Activated naive CD4-positive, alpha-beta T cell treated with anti-CD3 and anti-CD28 coated beads, Interleukin-2, amount 10 ng/mL, durations not matched to agents 7 days and 5 days (primary cell): ENCODE measurements at regions of chr17 and their contacts with region 1.

Region 1: GRCh38 chr17:35242805-35243560 is at the start of gene SLFN5:
- DNase-seq: peak; percentile 96
- H3K4me3 Mint-ChIP-seq: peak within 1 kb of the TSS; percentile 91
- H3K27ac Mint-ChIP-seq: peak within 1 kb of the TSS; percentile 99
- H3K4me1 Mint-ChIP-seq: peaks cover 59% of the 10 kb centered on the region
- H3K27me3 Mint-ChIP-seq: peaks cover 4% of the 10 kb centered on the region

Region 2: DNA sequence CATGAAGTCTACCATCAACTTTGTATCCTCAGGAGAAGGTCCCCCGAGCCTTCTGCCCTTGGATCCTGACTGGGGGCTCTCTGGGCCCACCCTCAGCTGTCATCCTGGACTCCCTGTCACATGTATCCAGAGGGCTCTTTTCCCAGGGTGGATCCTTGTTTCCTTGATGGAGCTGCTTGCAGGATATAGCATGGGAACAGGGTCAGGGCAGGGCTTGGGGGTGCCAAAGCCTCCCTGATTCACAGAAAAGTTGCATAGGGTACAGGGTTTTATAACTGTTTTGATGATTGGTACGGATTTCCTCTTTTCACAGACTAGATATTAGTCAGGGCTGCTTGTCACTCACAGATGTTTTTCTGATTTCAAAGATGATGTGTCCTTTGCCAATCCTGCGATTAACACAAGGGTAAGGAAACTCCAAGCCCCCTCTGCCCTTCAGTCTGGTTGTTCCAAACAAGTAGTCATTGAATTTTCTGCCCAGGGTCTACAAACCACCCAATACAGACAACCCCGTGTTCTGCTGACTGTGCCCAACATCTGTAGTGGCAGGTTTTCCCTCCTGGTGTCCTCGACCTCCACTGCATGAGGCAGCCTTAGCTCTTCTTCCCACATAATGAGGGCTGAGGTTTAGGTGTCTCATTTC is 28.2 kb before region 1 on chr17:
- CTCF ChIA-PET with region 1: interaction called, 49 read pairs
- DNase-seq: peak; percentile 52
- H3K4me3 Mint-ChIP-seq: peak overlapping the region; percentile 70
- H3K27ac Mint-ChIP-seq: peak overlapping the region; percentile 99
- H3K4me1 Mint-ChIP-seq: peaks cover 94% of the 10 kb centered on the region
- H3K27me3 Mint-ChIP-seq: no peaks in the 10 kb centered on the region

Region 3: GRCh38 chr17:35229638-35230037 is 13.3 kb before region 1 on chr17:
- CTCF ChIA-PET with region 1: no interaction called
- DNase-seq: no peak
- H3K4me3 Mint-ChIP-seq: no peak overlapping the region
- H3K27ac Mint-ChIP-seq: no peak overlapping the region
- H3K4me1 Mint-ChIP-seq: peaks cover 20% of the 10 kb centered on the region
- H3K27me3 Mint-ChIP-seq: no peaks in the 10 kb centered on the region

Region 4: GRCh38 chr17:35254107-35254802 is 11.3 kb after region 1 on chr17:
- CTCF ChIA-PET with region 1: no interaction called
- DNase-seq: no peak
- H3K4me3 Mint-ChIP-seq: no peak overlapping the region
- H3K27ac Mint-ChIP-seq: no peak overlapping the region
- H3K4me1 Mint-ChIP-seq: peaks cover 83% of the 10 kb centered on the region
- H3K27me3 Mint-ChIP-seq: no peaks in the 10 kb centered on the region

Region 5: DNA sequence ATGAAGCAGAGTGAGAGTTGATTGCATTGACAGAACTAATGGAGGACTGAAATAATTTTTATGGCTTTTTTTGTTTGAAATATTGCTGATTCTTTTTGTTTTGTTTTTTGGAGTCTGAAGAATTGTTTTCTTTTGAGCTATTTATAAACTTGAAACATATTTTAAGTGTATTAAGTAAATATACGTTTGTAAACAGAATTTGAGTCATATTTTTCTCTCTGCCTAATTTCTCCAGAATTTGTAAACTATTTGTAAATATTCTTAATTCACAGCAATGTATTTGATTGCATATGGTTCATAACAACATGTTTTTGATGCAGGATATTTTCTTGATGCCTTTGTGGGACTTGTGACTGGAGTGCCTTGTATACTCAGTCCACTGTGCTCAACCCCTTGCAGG is 79.8 kb after region 1 on chr17:
- CTCF ChIA-PET with region 1: no interaction called
- DNase-seq: no peak
- H3K4me3 Mint-ChIP-seq: no peak overlapping the region
- H3K27ac Mint-ChIP-seq: no peak overlapping the region
- H3K4me1 Mint-ChIP-seq: peaks cover 5% of the 10 kb centered on the region
- H3K27me3 Mint-ChIP-seq: peaks cover 17% of the 10 kb centered on the region